Panc1 (cell line): ENCODE measurements at regions of chr3 and their contacts with region 1.

Region 1: DNA sequence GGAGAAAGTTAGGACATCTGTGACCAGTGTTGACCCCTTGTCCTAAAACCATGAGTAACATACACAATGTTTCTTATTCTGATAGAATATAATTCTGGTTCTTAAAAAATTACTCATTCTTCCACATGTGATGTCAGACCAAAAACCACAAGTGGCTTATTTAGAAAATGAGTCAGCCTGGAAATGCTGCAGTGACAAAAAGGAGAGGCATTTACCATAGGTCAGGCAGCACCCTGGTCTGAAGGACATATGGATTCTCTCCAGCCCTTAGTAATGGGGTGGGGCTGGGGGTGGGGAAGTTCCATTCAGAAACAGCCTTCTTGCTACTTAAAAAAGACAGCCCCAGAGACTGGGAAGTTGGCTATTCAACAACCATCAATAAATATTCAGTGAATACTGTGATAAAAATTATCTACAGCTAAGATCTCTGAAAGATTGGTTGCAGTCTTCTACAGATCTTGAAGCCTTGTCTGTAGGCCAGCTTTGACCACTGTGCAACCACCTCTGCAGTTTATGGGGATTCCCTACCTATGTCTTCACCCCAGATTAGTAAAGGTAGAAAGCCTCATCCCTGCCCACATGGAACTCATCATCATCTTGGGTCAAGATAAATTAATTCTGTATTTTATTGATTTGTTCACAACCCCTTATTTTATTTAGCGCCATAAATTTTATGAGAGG is 34.9 kb upstream of the TIMP4 start:
- DNase-seq: peak; percentile 86
- ATAC-seq: peak; percentile 92
- H3K4me3 ChIP-seq: no peak overlapping the region
- H3K27ac ChIP-seq: peak overlapping the region; percentile 86
- H3K4me1 ChIP-seq: peaks cover 32% of the 10 kb centered on the region
- H3K27me3 ChIP-seq: no peaks in the 10 kb centered on the region
- CTCF ChIP-seq: no peak

Region 2: DNA sequence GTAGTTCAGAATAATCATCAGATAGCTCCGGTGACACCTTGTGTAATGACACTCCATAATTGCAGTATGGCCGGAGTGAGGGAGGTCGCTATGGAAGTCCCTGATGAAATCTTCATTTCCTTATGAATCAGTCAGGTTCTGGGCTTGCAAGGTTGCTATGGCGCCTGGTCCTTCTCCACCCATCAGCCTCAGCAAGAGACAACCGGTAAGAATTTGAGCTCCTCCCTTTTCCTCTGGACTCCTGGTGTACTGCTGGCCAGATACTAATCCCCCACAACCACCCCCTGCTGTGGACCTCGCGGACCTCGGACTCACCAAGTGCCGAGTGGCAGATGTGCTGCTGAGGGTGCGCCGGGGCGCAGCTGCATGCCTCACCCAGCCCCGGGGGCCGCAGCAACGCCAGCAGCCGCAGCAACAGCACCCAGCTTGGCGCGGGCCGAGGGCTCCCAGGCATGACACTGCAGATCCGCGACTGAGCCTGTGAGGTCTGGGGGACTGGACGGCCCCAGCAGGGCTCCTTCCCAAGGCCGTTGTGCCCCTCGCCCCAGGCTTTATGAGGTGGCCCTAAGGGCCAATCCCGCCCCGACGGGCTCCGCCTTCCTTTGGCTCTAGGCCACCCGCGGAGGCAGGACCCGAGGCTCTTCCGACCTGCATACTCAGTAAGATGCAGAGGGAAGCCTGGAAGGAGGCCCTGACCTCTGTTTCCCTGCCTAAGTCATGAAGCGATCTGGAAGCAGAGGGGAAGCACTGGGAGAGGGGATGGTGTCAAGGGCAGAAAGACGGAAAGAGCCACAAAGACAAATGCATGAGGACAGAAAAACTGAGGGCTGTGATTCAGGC is 35.0 kb before region 1 on chr3 and contains the start of gene TIMP4:
- CTCF ChIA-PET with region 1: no interaction called
- POLR2A ChIA-PET with region 1: no interaction called
- in situ Hi-C with region 1: no loop called
- intact Hi-C with region 1: no loop called
- DNase-seq: no peak
- ATAC-seq: no peak
- H3K4me3 ChIP-seq: no peak within 1 kb of the TSS
- H3K27ac ChIP-seq: no peak within 1 kb of the TSS
- H3K4me1 ChIP-seq: no peaks in the 10 kb centered on the region
- H3K27me3 ChIP-seq: no peaks in the 10 kb centered on the region
- CTCF ChIP-seq: no peak
- total RNA-seq, gene TIMP4: not detected

Region 3: GRCh38 chr3:12287727-12288191 is 94.1 kb after region 1 on chr3:
- CTCF ChIA-PET with region 1: interaction called, 3 read pairs
- POLR2A ChIA-PET with region 1: no interaction called
- in situ Hi-C with region 1: no loop called
- intact Hi-C with region 1: loop called (anchors 10 kb)
- DNase-seq: no peak
- ATAC-seq: peak; percentile 53
- H3K4me3 ChIP-seq: peak overlapping the region; percentile 64 to 76
- H3K27ac ChIP-seq: peak overlapping the region; percentile 93; the same call in 1 of the 2 replicates
- H3K4me1 ChIP-seq: peaks cover 8% of the 10 kb centered on the region
- H3K27me3 ChIP-seq: no peaks in the 10 kb centered on the region
- CTCF ChIP-seq: peak; percentile 14; the same call in 1 of the 2 replicates